Activated CD4-positive, alpha-beta memory T cell treated with anti-CD3 and anti-CD28 coated beads, Interleukin-2, amount 10 ng/mL, durations not matched to agents 7 days and 5 days (primary cell): ENCODE measurements at regions of chr16 and their contacts with region 1.

Region 1: DNA sequence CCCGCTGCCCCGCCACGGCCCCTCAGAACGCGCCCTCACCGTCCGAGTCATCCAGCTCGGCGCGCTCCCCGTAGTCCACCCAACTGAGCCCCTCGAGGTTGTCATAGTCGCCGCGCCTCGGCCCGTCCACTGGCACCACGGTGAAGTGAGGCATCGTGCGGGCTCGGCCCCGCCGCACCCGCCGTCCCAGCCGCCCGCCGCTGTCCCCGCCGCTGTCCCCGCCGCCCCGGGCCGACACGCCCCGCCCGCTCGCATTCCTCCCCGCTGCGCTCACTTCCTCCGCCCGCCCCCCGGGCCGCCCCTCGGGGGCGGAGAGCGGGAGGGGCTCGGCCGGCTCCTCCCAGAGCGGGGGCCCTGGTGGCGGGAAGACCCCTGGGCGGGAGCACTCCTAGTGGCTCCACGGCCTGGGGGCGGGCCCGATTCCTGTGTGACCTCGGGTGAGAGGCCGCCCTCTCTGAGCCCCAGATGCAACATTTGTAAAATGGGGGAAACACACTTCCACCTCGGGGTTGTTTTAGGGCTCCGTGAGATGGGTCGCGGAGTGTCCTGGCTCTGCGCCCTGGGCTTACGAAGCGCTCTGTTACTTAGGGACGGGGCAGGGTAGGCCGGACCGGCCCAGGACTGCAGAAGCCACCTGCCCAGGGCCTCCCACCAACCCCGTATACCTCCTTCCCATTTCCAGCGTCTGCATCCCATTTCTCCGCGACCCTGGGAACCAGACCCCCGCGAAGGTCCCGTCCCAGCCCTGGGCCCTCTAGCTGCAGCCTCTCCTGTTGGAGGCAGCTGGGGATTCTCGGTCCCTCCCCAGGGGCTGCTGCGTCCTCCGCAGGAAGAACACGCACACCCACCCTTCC is at the start of gene SLC12A4:
- DNase-seq: peak; percentile 89
- H3K4me3 Mint-ChIP-seq: peak within 1 kb of the TSS; percentile 100
- H3K27ac Mint-ChIP-seq: peak within 1 kb of the TSS; percentile 95
- H3K4me1 Mint-ChIP-seq: peaks cover 26% of the 10 kb centered on the region
- H3K27me3 Mint-ChIP-seq: no peaks in the 10 kb centered on the region
- total RNA-seq, gene SLC12A4: 37.9 to 40.0 TPM

Region 2: DNA sequence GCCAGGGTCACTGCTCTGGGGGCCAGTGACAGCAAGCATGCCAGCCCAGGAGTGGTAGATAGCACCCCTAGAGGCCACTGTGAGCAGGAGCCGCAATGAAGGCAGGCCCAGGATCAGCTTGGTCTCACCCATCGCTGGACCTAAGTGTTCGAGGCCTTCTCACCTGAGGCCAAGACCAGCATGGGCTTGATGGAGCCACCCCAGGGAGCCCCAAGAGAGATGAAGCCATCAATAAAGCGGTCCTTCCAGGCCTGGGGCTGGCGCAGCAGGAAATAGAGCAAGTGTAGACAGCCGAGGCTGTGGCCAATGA is 26.5 kb before region 1 on chr16:
- CTCF ChIA-PET with region 1: interaction called, 11 read pairs
- POLR2A ChIA-PET with region 1: interaction called, 41 read pairs
- DNase-seq: peak; percentile 46
- H3K4me3 Mint-ChIP-seq: no peak overlapping the region
- H3K27ac Mint-ChIP-seq: peak overlapping the region; percentile 66
- H3K4me1 Mint-ChIP-seq: peaks cover 31% of the 10 kb centered on the region
- H3K27me3 Mint-ChIP-seq: no peaks in the 10 kb centered on the region

Region 3: DNA sequence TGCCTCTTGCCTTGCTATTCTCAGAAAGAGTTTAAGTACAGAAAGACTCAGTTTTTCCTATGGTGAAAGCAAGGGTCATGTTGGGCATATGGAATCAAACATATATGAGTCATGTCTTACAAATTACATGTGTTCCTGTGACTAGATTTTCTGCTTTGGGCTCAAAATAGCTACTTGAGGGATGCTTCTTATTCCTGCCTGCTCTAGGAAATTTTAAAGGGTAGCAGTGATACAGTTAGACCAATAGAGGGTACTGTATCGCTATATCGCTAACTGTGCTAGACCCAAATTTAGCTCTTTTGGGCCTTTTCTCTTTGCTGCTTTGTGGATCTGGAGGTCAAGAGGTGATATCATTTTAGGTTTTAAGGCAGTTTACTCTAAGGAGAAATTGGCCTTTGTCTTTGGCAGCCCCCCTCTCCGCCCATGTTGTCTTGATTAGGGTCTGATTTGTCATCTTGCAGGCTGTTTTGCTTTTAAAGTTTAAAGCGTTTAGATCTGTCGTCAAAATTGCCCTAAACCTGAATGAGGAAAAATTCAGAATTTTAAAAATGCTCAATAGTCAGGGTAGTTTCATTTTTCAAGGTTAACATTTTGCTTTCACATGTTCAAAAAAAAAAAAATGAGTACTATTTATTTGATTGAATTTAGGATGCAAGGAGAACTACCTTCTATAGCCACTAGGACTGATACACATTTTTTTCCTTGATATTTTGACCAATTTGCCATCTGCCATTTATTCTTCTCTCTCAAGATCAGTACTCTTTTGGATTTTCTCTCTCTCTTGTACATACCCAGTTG is 125.4 kb after region 1 on chr16:
- CTCF ChIA-PET with region 1: no interaction called
- POLR2A ChIA-PET with region 1: no interaction called
- DNase-seq: no peak
- H3K4me3 Mint-ChIP-seq: peak overlapping the region; percentile 0
- H3K27ac Mint-ChIP-seq: no peak overlapping the region
- H3K4me1 Mint-ChIP-seq: peaks cover 71% of the 10 kb centered on the region
- H3K27me3 Mint-ChIP-seq: no peaks in the 10 kb centered on the region